GM13976 (cell line): ENCODE measurements at regions of chr9 and their contacts with region 1.

Region 1: DNA sequence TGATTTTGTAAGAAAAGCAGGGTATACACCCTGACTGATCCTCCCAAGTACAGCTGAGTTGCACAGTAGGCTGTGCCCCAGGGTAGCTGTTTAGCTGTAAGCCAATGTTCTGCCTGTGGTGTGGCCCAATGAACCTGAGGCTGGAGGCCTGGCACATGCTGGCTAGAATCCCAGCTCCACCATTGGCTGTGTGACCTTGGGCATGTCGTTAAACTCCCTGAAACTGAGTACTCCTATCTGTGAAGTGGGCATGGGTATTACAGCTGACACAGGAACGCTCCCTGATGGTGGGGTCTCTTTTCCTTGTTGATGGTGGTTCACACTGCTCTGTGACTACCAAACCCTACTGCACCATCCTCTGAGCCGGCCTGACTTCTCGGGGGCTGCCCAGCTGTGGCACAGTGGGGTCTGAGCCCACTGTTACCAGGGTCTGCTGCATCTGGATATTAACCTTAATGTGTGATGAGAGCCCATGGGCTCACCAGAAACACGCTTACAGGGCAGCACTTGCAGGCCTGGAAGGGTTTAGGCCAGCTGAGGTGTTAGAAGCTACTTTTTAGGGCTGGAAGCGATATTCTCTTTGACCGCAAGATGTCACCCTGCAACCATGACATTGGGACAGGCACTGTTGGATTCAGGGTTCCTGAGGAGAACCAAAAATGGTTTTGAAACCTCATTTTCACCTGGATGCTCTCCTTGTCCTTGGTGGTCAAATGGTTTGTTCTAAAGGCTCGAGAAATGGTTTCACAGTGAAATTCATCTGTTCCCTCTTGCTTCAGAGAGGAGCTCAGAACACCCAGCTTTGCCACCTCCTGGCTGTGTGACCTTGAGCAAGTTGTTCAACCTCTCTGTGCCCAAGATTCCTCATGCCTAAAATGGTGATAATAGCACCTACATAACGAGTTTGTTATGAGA is 6.8 kb upstream of the GADD45G start:
- DNase-seq: peak; percentile 61
- CTCF ChIP-seq: peak; percentile 68

Region 2: GRCh38 chr9:89732295-89732938 is 134.4 kb after region 1 on chr9:
- in situ Hi-C with region 1: no loop called
- DNase-seq: no peak
- CTCF ChIP-seq: no peak

Region 3: GRCh38 chr9:90102292-90102901 is 504.4 kb after region 1 on chr9:
- in situ Hi-C with region 1: loop called (anchors 5 kb)
- DNase-seq: peak; percentile 87
- CTCF ChIP-seq: peak; percentile 78